ENCODE measurements at regions of chr5 and their contacts with region 1.

Region 1: DNA sequence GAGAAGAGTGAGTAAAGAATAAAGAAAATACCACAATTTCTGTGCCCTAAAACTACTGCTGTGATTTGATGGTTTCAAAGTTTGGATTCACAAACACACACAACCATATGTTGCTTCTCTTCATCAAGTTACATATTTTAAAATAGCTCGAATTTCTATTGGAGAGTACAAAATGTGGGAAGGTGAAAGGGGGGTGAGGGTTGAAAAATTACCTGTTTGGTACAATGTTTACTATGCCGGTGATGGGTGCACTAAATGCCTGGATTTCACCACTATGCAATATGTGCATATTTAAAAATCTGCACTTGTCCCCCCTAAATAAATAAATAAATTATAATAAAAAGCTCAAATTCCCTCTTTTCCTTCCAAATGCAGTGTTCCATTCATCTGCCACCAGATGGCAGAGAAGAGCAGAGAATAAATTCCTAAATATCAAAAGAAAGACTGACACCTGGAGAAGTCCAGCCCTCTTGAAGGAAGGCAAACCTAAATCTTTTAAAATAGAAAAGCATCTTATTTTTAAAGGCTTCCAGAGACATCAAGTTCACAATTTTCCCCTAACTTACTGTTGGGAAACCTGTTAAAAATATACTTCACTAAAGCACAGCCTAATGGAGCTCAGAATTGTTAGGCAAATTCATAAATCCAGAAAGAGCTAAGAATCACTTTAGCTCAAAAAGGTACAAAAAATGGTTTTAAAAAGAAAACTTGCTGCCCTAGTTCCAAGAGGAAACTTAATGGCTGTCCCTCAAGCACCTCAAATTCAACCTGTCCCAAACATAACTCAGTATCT is 24.8 kb upstream of the HNRNPA0 start:
- DNase-seq: no peak
- H3K4me3 ChIP-seq: no peak overlapping the region
- H3K27ac ChIP-seq: no peak overlapping the region
- H3K4me1 ChIP-seq: no peaks in the 10 kb centered on the region
- H3K27me3 ChIP-seq: no peaks in the 10 kb centered on the region
- CTCF ChIP-seq: peak; percentile 51 to 62 (median 57)
- EP300 ChIP-seq: no peak
- POLR2A ChIP-seq: no peak

Region 2: GRCh38 chr5:138138949-138139780 is 360.2 kb after region 1 on chr5 and contains the start of gene NME5:
- intact Hi-C with region 1: loop called in 3 of 4 experiments (anchors 5 to 10 kb)
- DNase-seq: peak; percentile 57 to 82 (median 70)
- H3K4me3 ChIP-seq: peak within 1 kb of the TSS; percentile 41
- H3K27ac ChIP-seq: no peak within 1 kb of the TSS
- H3K4me1 ChIP-seq: no peaks in the 10 kb centered on the region
- H3K27me3 ChIP-seq: no peaks in the 10 kb centered on the region
- CTCF ChIP-seq: no peak
- EP300 ChIP-seq: no peak
- POLR2A ChIP-seq: no peak
- total RNA-seq, gene NME5: 3.6 to 16.2 (median 7.2) TPM